Breast epithelium (tissue), 4 donors: ENCODE measurements at regions of chr17 and their contacts with region 1.

Region 1: GRCh38 chr17:2380226-2380922 is 20.5 kb downstream of the MNT start:
- DNase-seq: no peak
- H3K4me3 ChIP-seq: no peak overlapping the region
- H3K27ac ChIP-seq: peak overlapping the region; percentile 15 to 61
- H3K4me1 ChIP-seq: peaks cover 0 to 4% of the 10 kb centered on the region in 2 donors
- H3K27me3 ChIP-seq: no peaks in the 10 kb centered on the region
- CTCF ChIP-seq: no peak
- POLR2A ChIP-seq: no peak

Region 2: DNA sequence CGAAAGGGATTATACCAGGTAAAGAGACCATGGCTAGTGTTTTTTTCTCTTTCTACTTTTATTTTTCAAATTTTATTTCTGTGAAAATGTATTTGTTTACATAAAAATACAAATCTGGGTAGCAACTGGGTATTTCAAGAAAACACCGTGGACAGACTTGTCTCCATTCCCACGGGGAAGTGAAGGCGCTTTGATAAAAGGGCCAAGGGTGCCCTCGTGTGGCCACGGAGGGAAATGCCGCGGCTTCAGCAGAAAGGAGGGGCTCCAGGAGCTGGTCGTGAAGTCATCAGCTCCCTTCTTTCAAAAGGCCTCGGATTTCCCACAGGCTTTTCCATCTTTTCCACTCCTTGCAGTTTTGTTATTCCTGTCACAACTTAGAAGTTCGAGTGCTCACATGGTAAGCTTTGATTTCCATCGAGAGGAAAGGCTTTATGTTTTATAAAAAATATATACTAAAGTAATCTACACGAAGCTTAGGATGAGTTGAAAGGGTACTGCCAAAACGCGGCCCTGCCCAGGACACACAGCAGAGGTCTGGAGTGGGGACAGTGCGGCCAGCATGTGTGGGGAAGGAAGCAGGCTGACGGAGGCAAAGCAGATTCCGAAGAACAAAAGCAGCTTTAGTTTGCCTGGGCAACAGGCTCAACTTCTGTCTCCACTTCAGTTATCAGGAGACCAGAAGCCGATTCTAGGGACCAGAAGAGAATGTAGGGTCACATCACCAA is 35.8 kb after region 1 on chr17:
- intact Hi-C with region 1: loop called (anchors 5 kb)
- DNase-seq: peak; percentile 90 to 91
- H3K4me3 ChIP-seq: no peak overlapping the region
- H3K27ac ChIP-seq: peak overlapping the region in 1 of 2 donors; percentile 22
- H3K4me1 ChIP-seq: no peaks in the 10 kb centered on the region
- H3K27me3 ChIP-seq: no peaks in the 10 kb centered on the region
- CTCF ChIP-seq: peak; percentile 96 to 98 (median 97)
- POLR2A ChIP-seq: no peak

Region 3: GRCh38 chr17:2449486-2449885 is 69.1 kb after region 1 on chr17:
- intact Hi-C with region 1: no loop called
- DNase-seq: no peak
- H3K4me3 ChIP-seq: no peak overlapping the region
- H3K27ac ChIP-seq: no peak overlapping the region
- H3K4me1 ChIP-seq: no peaks in the 10 kb centered on the region
- H3K27me3 ChIP-seq: no peaks in the 10 kb centered on the region
- CTCF ChIP-seq: no peak
- POLR2A ChIP-seq: no peak

Region 4: GRCh38 chr17:2954898-2955445 is 574.6 kb after region 1 on chr17:
- intact Hi-C with region 1: no loop called
- DNase-seq: no peak
- H3K4me3 ChIP-seq: no peak overlapping the region
- H3K27ac ChIP-seq: peak overlapping the region in 1 of 2 donors; percentile 3
- H3K4me1 ChIP-seq: no peaks in the 10 kb centered on the region
- H3K27me3 ChIP-seq: no peaks in the 10 kb centered on the region
- CTCF ChIP-seq: no peak
- POLR2A ChIP-seq: no peak